ENCODE measurements at regions of chr5 and their contacts with region 1.

Region 1: GRCh38 chr5:150560401-150561193 is 52.7 kb downstream of the NDST1 start:
- DNase-seq: peak; percentile 78
- ATAC-seq: peak; percentile 88

Region 2: DNA sequence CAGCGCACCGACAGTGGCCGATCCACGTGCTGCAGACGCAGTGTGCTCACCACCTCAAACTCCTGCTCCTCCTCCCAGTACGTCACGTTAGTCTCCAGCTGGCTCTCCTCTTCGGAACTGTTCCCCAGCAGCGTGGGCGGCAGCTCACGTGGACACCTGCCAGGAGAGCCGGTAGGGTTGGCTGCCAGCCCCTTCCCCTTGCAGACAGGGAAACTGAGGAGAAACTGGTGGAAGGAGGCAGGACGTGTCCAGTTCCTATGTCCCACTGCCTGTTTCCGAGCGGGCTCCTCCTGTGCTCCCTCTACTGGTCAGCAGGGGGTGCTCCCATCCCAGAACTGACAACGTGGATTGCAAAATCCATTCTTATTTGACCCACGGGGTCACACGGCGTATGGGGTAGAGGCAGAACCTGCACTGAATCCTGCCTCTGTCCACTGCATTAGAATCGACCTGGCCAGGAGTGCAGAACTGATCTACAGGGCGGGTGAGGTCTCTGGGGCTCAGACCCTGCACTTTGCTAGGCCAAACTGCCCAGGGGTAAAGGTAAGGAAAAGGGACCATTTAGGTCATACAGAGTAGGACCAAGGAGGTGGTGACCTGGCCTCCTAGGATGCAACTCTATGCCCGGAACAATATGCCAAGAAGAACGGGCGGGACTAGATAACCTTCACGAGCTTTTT is 430.6 kb before region 1 on chr5:
- intact Hi-C with region 1: no loop called
- DNase-seq: no peak
- ATAC-seq: peak; percentile 70

Region 3: DNA sequence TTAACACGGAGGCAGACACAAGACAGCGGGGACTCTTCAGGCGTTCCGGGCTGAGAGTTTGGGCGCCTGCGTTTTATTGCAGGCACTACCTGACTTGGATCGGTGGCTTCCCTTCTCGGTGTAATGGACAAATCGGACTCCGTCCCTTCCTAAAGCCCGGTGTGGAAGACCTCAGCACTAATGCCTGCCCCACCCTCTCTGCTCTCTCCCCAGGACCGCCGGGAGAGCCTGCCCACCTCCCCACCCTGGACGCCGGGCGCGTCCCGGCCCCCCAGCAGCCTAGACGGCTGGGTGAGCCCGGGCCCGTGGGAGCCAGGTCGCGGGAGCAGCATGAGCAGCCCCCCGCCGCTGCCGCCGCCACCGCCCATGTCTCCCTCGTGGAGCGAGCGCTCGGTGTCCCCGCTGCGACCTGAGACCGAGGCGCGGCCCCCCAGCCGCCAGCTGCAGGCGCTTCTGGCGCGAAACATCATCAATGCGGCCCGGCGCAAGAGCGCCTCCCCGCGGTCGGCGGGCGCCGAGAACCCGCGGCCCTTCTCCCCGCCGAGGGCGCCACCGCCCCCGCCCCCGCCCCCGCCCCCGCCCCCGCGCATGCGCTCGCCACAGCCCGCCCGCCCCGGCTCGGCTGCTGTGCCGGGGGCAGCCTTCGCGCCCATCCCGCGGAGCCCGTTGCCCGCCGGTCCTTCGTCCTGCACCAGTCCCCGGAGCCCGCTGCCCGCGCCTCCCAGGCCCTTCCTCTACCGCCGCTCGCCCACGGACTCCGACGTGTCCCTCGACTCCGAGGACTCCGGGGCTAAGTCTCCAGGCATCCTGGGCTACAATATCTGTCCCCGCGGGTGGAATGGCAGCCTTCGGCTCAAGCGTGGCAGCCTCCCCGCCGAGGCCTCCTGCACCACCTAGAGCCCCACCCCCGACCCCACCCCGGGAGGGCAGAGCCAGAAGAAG is 95.9 kb after region 1 on chr5:
- intact Hi-C with region 1: loop called (anchors 1 kb)
- DNase-seq: peak; percentile 88
- ATAC-seq: peak; percentile 65

Region 4: DNA sequence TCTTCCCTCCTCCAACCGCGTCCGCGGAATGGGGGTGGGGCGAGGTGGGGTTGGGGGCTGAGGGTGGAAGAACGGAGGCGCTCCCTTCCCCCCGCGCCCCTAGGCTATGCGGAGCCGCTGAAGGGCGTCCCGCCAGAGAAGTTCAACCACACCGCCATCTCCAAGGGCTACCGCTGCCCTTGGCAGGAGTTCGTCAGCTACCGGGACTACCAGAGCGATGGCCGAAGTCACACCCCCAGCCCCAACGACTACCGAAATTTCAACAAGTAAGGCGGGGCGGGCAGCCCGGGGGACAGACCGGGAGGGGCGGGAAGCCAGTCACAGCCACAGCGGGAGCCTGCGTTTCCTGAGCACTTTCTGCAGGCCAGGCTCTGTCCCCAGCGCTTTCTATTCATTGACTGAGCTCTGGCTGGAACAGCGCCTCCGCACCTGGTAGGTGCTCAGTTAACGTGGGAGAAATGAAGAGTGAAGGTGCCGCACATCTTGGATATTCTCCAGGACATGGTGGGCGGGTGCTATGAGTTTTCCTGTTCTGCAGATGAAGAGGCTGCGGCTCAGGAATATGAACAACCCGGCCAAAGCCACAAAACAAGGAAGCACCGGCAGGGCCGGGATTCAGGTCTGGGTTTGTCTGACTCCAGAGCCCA is 111.8 kb after region 1 on chr5:
- intact Hi-C with region 1: loop called (anchors 5 kb)
- DNase-seq: no peak
- ATAC-seq: peak; percentile 17

Region 5: DNA sequence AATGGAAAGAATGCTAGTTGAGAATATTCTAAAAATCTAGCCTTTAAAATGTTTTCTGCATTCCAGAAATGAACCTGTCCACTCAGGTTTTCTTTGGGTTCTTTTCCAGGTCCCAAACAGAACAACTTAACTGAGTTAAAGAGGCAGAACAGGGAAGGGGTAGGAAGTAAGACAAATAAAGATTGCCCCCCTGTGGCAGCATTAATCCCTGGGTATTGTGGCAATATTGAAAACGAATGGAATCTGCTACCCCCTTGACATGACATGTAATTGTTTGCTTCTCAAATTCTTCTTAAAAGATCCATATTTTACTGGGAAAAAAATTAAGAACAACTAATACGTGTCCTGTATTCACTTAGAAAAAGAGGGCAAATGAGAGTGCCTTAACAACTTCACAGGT is 149.6 kb after region 1 on chr5:
- intact Hi-C with region 1: loop called (anchors 1 kb)
- DNase-seq: no peak
- ATAC-seq: no peak

Region 6: GRCh38 chr5:150846654-150847333 is 286.2 kb after region 1 on chr5:
- intact Hi-C with region 1: loop called (anchors 2 kb)
- DNase-seq: no peak
- ATAC-seq: peak; percentile 84

Measured in Right ventricle myocardium inferior (tissue), 1 donor.